ENCODE measurements at regions of chr11 and their contacts with region 1.

Region 1: GRCh38 chr11:117426269-117426685 is 98.6 kb downstream of the CEP164 start:
- DNase-seq: peak; percentile 91
- H3K4me3 ChIP-seq: peak overlapping the region in 1 of 2 experiments; percentile 31; a peak in 1 of 4 replicates
- H3K27ac ChIP-seq: no peak overlapping the region
- H3K4me1 ChIP-seq: peaks cover 0 to 10% of the 10 kb centered on the region in 2 experiments; a peak in 1 of 4 replicates
- H3K27me3 ChIP-seq: no peaks in the 10 kb centered on the region
- CTCF ChIP-seq: peak; percentile 95
- EP300 ChIP-seq: no peak
- RAD21 ChIP-seq: peak; percentile 95

Region 2: DNA sequence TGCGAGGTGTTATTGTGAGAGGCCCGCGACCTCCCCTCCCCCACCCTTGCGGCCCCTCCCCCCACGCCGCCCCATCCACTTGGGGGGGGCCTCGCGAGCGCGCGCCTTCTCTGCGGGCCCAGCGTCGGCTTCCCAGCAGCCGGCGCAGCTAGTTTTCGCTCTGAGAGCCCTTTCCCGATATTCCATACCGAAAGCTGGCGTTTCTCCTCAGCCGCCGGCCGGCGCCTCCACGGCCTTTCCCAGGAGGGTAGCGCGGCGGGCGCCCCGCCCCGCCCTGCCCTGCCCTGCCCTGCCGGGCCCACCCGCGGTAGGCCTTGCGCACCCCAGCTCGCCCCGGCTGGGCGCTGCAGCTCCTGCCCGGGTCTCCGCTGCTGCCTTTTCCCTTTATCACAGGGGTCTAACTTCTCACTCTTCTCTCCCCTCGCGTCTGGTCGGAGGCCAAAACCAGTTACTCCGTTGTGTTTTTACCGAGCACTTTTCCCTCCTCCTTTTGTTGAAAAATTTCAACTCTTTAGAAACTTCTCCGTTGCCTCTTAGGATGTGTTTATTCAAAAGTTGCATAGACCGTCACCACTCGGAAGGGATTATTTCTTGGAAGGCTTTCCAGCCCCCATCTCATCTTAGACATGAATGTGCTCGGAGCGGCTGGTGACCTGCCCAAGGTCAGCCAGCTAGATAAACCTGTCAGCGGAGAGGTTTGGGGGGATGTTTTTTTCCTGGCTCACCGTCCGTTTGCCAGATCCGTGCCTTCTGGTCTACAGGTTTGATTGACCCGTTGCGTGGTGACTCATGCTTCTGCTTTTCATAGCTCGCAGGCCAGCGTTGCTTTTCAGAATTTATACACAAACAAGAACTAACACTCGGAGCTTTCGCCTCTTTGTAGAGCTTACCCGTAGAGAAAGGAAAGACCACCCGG is 281.5 kb before region 1 on chr11:
- CTCF ChIA-PET with region 1: no interaction called
- POLR2A ChIA-PET with region 1: no interaction called
- DNase-seq: peak; percentile 90
- H3K4me3 ChIP-seq: peak overlapping the region; percentile 76 to 84
- H3K27ac ChIP-seq: peak overlapping the region; percentile 82 to 88
- H3K4me1 ChIP-seq: peaks cover 0 to 8% of the 10 kb centered on the region in 2 experiments; a peak in 3 of 4 replicates
- H3K27me3 ChIP-seq: no peaks in the 10 kb centered on the region
- CTCF ChIP-seq: no peak
- EP300 ChIP-seq: no peak
- RAD21 ChIP-seq: no peak

Region 3: GRCh38 chr11:117256573-117256972 is 169.7 kb before region 1 on chr11:
- CTCF ChIA-PET with region 1: no interaction called
- POLR2A ChIA-PET with region 1: no interaction called
- DNase-seq: no peak
- H3K4me3 ChIP-seq: no peak overlapping the region
- H3K27ac ChIP-seq: no peak overlapping the region
- H3K4me1 ChIP-seq: peaks cover 0 to 4% of the 10 kb centered on the region in 2 experiments; a peak in 1 of 4 replicates
- H3K27me3 ChIP-seq: no peaks in the 10 kb centered on the region
- CTCF ChIP-seq: no peak
- EP300 ChIP-seq: no peak
- RAD21 ChIP-seq: no peak

Region 4: GRCh38 chr11:117281159-117281558 is 145.1 kb before region 1 on chr11:
- CTCF ChIA-PET with region 1: no interaction called
- POLR2A ChIA-PET with region 1: no interaction called
- DNase-seq: no peak
- H3K4me3 ChIP-seq: no peak overlapping the region
- H3K27ac ChIP-seq: peak overlapping the region; percentile 16 to 86; a peak in 3 of 4 replicates
- H3K4me1 ChIP-seq: peaks cover 0 to 28% of the 10 kb centered on the region in 2 experiments; a peak in 2 of 4 replicates
- H3K27me3 ChIP-seq: no peaks in the 10 kb centered on the region
- CTCF ChIP-seq: no peak
- EP300 ChIP-seq: peak in 1 of 2 experiments; percentile 73; a peak in 2 of 4 replicates
- RAD21 ChIP-seq: no peak

Region 5: GRCh38 chr11:117410861-117411710 is 15.2 kb before region 1 on chr11:
- CTCF ChIA-PET with region 1: interaction called, 73 read pairs
- POLR2A ChIA-PET with region 1: no interaction called
- DNase-seq: peak; percentile 77
- H3K4me3 ChIP-seq: no peak overlapping the region
- H3K27ac ChIP-seq: peak overlapping the region in 1 of 2 experiments; percentile 24; a peak in 2 of 4 replicates
- H3K4me1 ChIP-seq: peaks cover 0 to 12% of the 10 kb centered on the region in 2 experiments; a peak in 1 of 4 replicates
- H3K27me3 ChIP-seq: no peaks in the 10 kb centered on the region
- CTCF ChIP-seq: no peak
- EP300 ChIP-seq: no peak
- RAD21 ChIP-seq: peak; percentile 56

Region 6: GRCh38 chr11:117511931-117512539 is 85.8 kb after region 1 on chr11:
- CTCF ChIA-PET with region 1: interaction called, 43 read pairs
- POLR2A ChIA-PET with region 1: no interaction called
- DNase-seq: peak; percentile 54
- H3K4me3 ChIP-seq: no peak overlapping the region
- H3K27ac ChIP-seq: peak overlapping the region in 1 of 2 experiments; percentile 85; a peak in 2 of 4 replicates
- H3K4me1 ChIP-seq: peaks cover 0 to 56% of the 10 kb centered on the region in 2 experiments; a peak in 1 of 4 replicates
- H3K27me3 ChIP-seq: peaks cover 6% of the 10 kb centered on the region; the same call in 1 of the 2 replicates
- CTCF ChIP-seq: no peak
- EP300 ChIP-seq: no peak
- RAD21 ChIP-seq: no peak

Region 7: GRCh38 chr11:117771197-117771596 is 344.9 kb after region 1 on chr11:
- CTCF ChIA-PET with region 1: interaction called, 13 read pairs
- POLR2A ChIA-PET with region 1: no interaction called
- DNase-seq: no peak
- H3K4me3 ChIP-seq: no peak overlapping the region
- H3K27ac ChIP-seq: peak overlapping the region in 1 of 2 experiments; percentile 95; a peak in 1 of 4 replicates
- H3K4me1 ChIP-seq: peaks cover 0 to 31% of the 10 kb centered on the region in 2 experiments; a peak in 2 of 4 replicates
- H3K27me3 ChIP-seq: no peaks in the 10 kb centered on the region; the same call in 1 of the 2 replicates
- CTCF ChIP-seq: no peak
- EP300 ChIP-seq: no peak
- RAD21 ChIP-seq: no peak

Region 8: GRCh38 chr11:117817368-117818040 is 391.2 kb after region 1 on chr11:
- CTCF ChIA-PET with region 1: interaction called, 431 read pairs
- POLR2A ChIA-PET with region 1: interaction called, 9 read pairs
- DNase-seq: peak; percentile 83
- H3K4me3 ChIP-seq: peak overlapping the region in 1 of 2 experiments; percentile 33; a peak in 1 of 4 replicates
- H3K27ac ChIP-seq: no peak overlapping the region
- H3K4me1 ChIP-seq: peaks cover 8 to 28% of the 10 kb centered on the region in 2 experiments; a peak in 2 of 4 replicates
- H3K27me3 ChIP-seq: no peaks in the 10 kb centered on the region
- CTCF ChIP-seq: peak; percentile 98
- EP300 ChIP-seq: no peak
- RAD21 ChIP-seq: peak; percentile 92

Region 9: GRCh38 chr11:117979481-117980211 is 553.4 kb after region 1 on chr11:
- CTCF ChIA-PET with region 1: no interaction called
- POLR2A ChIA-PET with region 1: no interaction called
- DNase-seq: no peak
- H3K4me3 ChIP-seq: no peak overlapping the region
- H3K27ac ChIP-seq: no peak overlapping the region
- H3K4me1 ChIP-seq: peaks cover 0 to 4% of the 10 kb centered on the region in 2 experiments; a peak in 1 of 4 replicates
- H3K27me3 ChIP-seq: peaks cover 5% of the 10 kb centered on the region; the same call in 1 of the 2 replicates
- CTCF ChIP-seq: no peak
- EP300 ChIP-seq: no peak
- RAD21 ChIP-seq: no peak

Region 10: GRCh38 chr11:118051611-118052461 is 625.6 kb after region 1 on chr11:
- CTCF ChIA-PET with region 1: interaction called, 23 read pairs
- POLR2A ChIA-PET with region 1: no interaction called
- DNase-seq: no peak
- H3K4me3 ChIP-seq: no peak overlapping the region
- H3K27ac ChIP-seq: no peak overlapping the region
- H3K4me1 ChIP-seq: no peaks in the 10 kb centered on the region
- H3K27me3 ChIP-seq: peaks cover 8% of the 10 kb centered on the region; the same call in 1 of the 2 replicates
- CTCF ChIP-seq: no peak
- EP300 ChIP-seq: no peak
- RAD21 ChIP-seq: no peak

Measured in SK-N-SH (cell line).